ENCODE measurements at regions of chr2 and their contacts with region 1.

Region 1: GRCh38 chr2:232697100-232697865 is at the start of gene GIGYF2:
- DNase-seq: peak; percentile 84 to 97 (median 90)
- ATAC-seq: peak; percentile 83
- H3K4me3 ChIP-seq: peak within 1 kb of the TSS; percentile 95
- H3K4me3 Mint-ChIP-seq: peak within 1 kb of the TSS; percentile 97
- H3K27ac ChIP-seq: peak within 1 kb of the TSS; percentile 53 to 78
- H3K27ac Mint-ChIP-seq: peak within 1 kb of the TSS; percentile 91
- H3K4me1 ChIP-seq: peaks cover 31% of the 10 kb centered on the region
- H3K4me1 Mint-ChIP-seq: peaks cover 37% of the 10 kb centered on the region
- H3K27me3 ChIP-seq: no peaks in the 10 kb centered on the region
- H3K27me3 Mint-ChIP-seq: no peaks in the 10 kb centered on the region
- CTCF ChIP-seq: no peak
- total RNA-seq, gene GIGYF2: 52.5 to 55.5 TPM

Region 2: GRCh38 chr2:232550354-232551249 is 146.7 kb before region 1 on chr2 and contains the starts of genes EIF4E2 and TIGD1:
- CTCF ChIA-PET with region 1: no interaction called
- POLR2A ChIA-PET with region 1: no interaction called
- intact Hi-C with region 1: loop called in 1 of 2 experiments (anchors 2 kb)
- DNase-seq: peak; percentile 85 to 95 (median 90)
- ATAC-seq: peak; percentile 83
- H3K4me3 ChIP-seq: peak within 1 kb of the TSS; percentile 99
- H3K4me3 Mint-ChIP-seq: peak within 1 kb of the TSS; percentile 98
- H3K27ac ChIP-seq: peak within 1 kb of the TSS; percentile 91 to 95
- H3K27ac Mint-ChIP-seq: peak within 1 kb of the TSS; percentile 97
- H3K4me1 ChIP-seq: peaks cover 59% of the 10 kb centered on the region
- H3K4me1 Mint-ChIP-seq: peaks cover 85% of the 10 kb centered on the region
- H3K27me3 ChIP-seq: no peaks in the 10 kb centered on the region
- H3K27me3 Mint-ChIP-seq: no peaks in the 10 kb centered on the region
- CTCF ChIP-seq: peak; percentile 62
- total RNA-seq, gene EIF4E2: 45.9 to 46.0 TPM
- total RNA-seq, gene TIGD1: 22.1 to 22.2 TPM

Region 3: DNA sequence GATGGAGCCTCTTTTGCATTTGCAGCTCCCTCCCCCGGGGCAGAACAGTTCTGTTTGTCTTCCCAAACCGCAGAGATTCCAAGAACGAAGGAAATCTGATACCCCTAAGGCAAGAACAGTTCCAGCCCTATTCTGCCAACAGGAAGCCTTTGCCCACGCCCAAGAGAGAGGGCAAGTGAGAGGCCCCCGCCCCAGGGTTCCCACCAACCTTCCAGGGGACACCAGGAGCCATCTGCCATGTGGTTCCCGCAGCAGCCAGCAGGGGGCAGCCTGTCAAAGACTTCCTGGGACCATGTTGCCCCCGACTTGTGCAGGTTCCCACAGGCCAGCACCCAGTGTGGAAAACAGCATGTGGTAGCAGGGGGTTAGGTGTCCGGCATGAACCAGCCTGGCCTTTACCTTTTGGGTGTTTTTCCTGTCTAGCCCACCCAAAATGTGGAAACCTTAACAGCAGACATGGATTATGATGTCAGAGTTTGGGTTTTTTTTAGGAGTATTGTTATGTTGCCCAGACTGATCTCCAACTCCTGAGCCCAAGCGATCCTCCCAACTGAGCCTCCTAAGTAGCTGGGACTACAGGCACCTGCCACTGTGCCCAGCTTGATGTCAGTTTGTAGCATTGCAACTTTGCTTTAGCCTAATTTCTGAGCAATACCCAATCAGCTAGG is 85.6 kb before region 1 on chr2:
- CTCF ChIA-PET with region 1: no interaction called
- POLR2A ChIA-PET with region 1: no interaction called
- intact Hi-C with region 1: loop called (anchors 5 kb)
- DNase-seq: peak; percentile 50 to 76 (median 56)
- ATAC-seq: peak; percentile 61
- H3K4me3 ChIP-seq: no peak overlapping the region
- H3K4me3 Mint-ChIP-seq: no peak overlapping the region
- H3K27ac ChIP-seq: no peak overlapping the region
- H3K27ac Mint-ChIP-seq: no peak overlapping the region
- H3K4me1 ChIP-seq: peaks cover 5% of the 10 kb centered on the region
- H3K4me1 Mint-ChIP-seq: no peaks in the 10 kb centered on the region
- H3K27me3 ChIP-seq: no peaks in the 10 kb centered on the region
- H3K27me3 Mint-ChIP-seq: no peaks in the 10 kb centered on the region
- CTCF ChIP-seq: peak; percentile 81

Region 4: DNA sequence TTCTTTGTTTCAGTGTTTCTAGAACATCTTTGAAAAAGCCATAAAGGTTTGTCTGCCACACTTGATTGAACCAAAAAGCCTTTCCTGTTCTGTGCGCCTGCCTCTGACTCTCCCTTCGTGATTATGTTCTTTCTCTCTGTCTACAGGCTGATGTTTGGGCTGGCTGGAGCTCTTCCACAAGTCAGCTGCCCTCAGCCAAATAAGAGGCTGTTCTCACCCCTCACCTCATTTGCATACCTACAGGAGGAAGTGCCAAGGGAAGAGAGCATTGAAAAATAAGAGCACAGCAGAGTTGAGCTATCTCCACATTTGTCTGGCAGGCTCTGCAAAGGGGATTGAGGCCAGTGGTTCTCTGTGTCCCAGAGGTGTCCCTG is 378.7 kb after region 1 on chr2:
- CTCF ChIA-PET with region 1: no interaction called
- POLR2A ChIA-PET with region 1: no interaction called
- intact Hi-C with region 1: loop called in 1 of 2 experiments (anchors 10 kb)
- DNase-seq: peak in 7 of 14 experiments; percentile 32 to 76 (median 59)
- ATAC-seq: peak; percentile 78
- H3K4me3 ChIP-seq: peak overlapping the region; percentile 30
- H3K4me3 Mint-ChIP-seq: no peak overlapping the region
- H3K27ac ChIP-seq: peak overlapping the region; percentile 57 to 70
- H3K27ac Mint-ChIP-seq: no peak overlapping the region
- H3K4me1 ChIP-seq: peaks cover 79% of the 10 kb centered on the region
- H3K4me1 Mint-ChIP-seq: peaks cover 37% of the 10 kb centered on the region
- H3K27me3 ChIP-seq: no peaks in the 10 kb centered on the region
- H3K27me3 Mint-ChIP-seq: no peaks in the 10 kb centered on the region
- CTCF ChIP-seq: no peak

Region 5: GRCh38 chr2:233854241-233854981 is 1157.1 kb after region 1 on chr2 and contains the start of gene HJURP:
- CTCF ChIA-PET with region 1: no interaction called
- POLR2A ChIA-PET with region 1: no interaction called
- intact Hi-C with region 1: loop called in 1 of 2 experiments (anchors 5 kb)
- DNase-seq: peak; percentile 76 to 96 (median 82)
- ATAC-seq: peak; percentile 97
- H3K4me3 ChIP-seq: peak within 1 kb of the TSS; percentile 83
- H3K4me3 Mint-ChIP-seq: peak within 1 kb of the TSS; percentile 88
- H3K27ac ChIP-seq: no peak within 1 kb of the TSS
- H3K27ac Mint-ChIP-seq: peak within 1 kb of the TSS; percentile 21
- H3K4me1 ChIP-seq: peaks cover 21% of the 10 kb centered on the region
- H3K4me1 Mint-ChIP-seq: peaks cover 32% of the 10 kb centered on the region
- H3K27me3 ChIP-seq: peaks cover 4 to 9% of the 10 kb centered on the region in 2 experiments
- H3K27me3 Mint-ChIP-seq: peaks cover 16% of the 10 kb centered on the region
- CTCF ChIP-seq: no peak
- total RNA-seq, gene HJURP: 0.22 to 0.25 TPM

Region 6: GRCh38 chr2:233867993-233868532 is 1170.8 kb after region 1 on chr2 and contains the start of gene MSL3B:
- CTCF ChIA-PET with region 1: no interaction called
- POLR2A ChIA-PET with region 1: no interaction called
- intact Hi-C with region 1: loop called in 1 of 2 experiments (anchors 5 kb)
- DNase-seq: peak; percentile 27 to 89 (median 55)
- ATAC-seq: peak; percentile 94
- H3K4me3 ChIP-seq: peak within 1 kb of the TSS; percentile 74
- H3K4me3 Mint-ChIP-seq: peak within 1 kb of the TSS; percentile 92
- H3K27ac ChIP-seq: peak within 1 kb of the TSS in 1 of 2 donors; percentile 17
- H3K27ac Mint-ChIP-seq: peak within 1 kb of the TSS; percentile 82
- H3K4me1 ChIP-seq: peaks cover 6% of the 10 kb centered on the region
- H3K4me1 Mint-ChIP-seq: peaks cover 13% of the 10 kb centered on the region
- H3K27me3 ChIP-seq: peaks cover 0 to 10% of the 10 kb centered on the region in 2 experiments
- H3K27me3 Mint-ChIP-seq: peaks cover 23% of the 10 kb centered on the region
- CTCF ChIP-seq: no peak

Region 7: DNA sequence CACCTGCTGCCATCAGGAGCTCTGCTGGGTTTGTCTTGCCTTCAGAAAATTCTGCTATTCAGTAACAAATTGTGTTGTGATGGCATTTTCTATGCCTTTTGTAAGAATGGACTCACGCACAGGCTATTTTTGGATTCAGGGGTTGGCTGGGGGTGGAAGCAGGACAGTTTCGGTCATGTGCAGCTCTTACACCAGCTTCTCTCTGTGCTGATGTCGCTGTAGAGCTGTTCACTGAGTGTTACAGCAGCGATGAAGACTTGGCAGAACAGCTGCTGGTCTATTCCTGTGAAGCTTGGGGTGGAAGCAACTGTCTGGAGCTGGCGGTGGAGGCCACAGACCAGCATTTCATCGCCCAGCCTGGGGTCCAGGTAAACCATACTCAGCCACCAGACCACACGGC is 1269.1 kb after region 1 on chr2:
- CTCF ChIA-PET with region 1: no interaction called
- POLR2A ChIA-PET with region 1: no interaction called
- intact Hi-C with region 1: no loop called
- DNase-seq: no peak
- ATAC-seq: no peak
- H3K4me3 ChIP-seq: no peak overlapping the region
- H3K4me3 Mint-ChIP-seq: no peak overlapping the region
- H3K27ac ChIP-seq: no peak overlapping the region
- H3K27ac Mint-ChIP-seq: no peak overlapping the region
- H3K4me1 ChIP-seq: peaks cover 10% of the 10 kb centered on the region
- H3K4me1 Mint-ChIP-seq: peaks cover 12% of the 10 kb centered on the region
- H3K27me3 ChIP-seq: no peaks in the 10 kb centered on the region
- H3K27me3 Mint-ChIP-seq: no peaks in the 10 kb centered on the region
- CTCF ChIP-seq: no peak